CD4-positive, alpha-beta memory T cell (primary cell): ENCODE measurements at regions of chr19 and their contacts with region 1.

Region 1: GRCh38 chr19:2021453-2022140 is 6.1 kb upstream of the BTBD2 start:
- DNase-seq: no peak
- H3K4me3 ChIP-seq: no peak overlapping the region
- H3K4me3 Mint-ChIP-seq: no peak overlapping the region
- H3K27ac ChIP-seq: no peak overlapping the region
- H3K27ac Mint-ChIP-seq: no peak overlapping the region
- H3K4me1 ChIP-seq: peaks cover 5% of the 10 kb centered on the region
- H3K4me1 Mint-ChIP-seq: peaks cover 1 to 13% (median 5%) of the 10 kb centered on the region in 4 donors
- H3K27me3 ChIP-seq: no peaks in the 10 kb centered on the region
- H3K27me3 Mint-ChIP-seq: no peaks in the 10 kb centered on the region

Region 2: GRCh38 chr19:2032296-2032941 is 10.8 kb after region 1 on chr19:
- CTCF ChIA-PET with region 1: interaction called, 15 read pairs
- POLR2A ChIA-PET with region 1: interaction called, 5 read pairs
- intact Hi-C with region 1: no loop called
- DNase-seq: peak in 4 of 5 donors; percentile 35 to 65 (median 40)
- H3K4me3 ChIP-seq: no peak overlapping the region
- H3K4me3 Mint-ChIP-seq: peak overlapping the region; percentile 50 to 84 (median 68)
- H3K27ac ChIP-seq: peak overlapping the region; percentile 59
- H3K27ac Mint-ChIP-seq: peak overlapping the region; percentile 76 to 96 (median 92)
- H3K4me1 ChIP-seq: peaks cover 35% of the 10 kb centered on the region
- H3K4me1 Mint-ChIP-seq: peaks cover 16 to 36% (median 25%) of the 10 kb centered on the region in 4 donors
- H3K27me3 ChIP-seq: no peaks in the 10 kb centered on the region
- H3K27me3 Mint-ChIP-seq: no peaks in the 10 kb centered on the region